A673 (cell line): ENCODE measurements at regions of chr11 and their contacts with region 1.

Region 1: DNA sequence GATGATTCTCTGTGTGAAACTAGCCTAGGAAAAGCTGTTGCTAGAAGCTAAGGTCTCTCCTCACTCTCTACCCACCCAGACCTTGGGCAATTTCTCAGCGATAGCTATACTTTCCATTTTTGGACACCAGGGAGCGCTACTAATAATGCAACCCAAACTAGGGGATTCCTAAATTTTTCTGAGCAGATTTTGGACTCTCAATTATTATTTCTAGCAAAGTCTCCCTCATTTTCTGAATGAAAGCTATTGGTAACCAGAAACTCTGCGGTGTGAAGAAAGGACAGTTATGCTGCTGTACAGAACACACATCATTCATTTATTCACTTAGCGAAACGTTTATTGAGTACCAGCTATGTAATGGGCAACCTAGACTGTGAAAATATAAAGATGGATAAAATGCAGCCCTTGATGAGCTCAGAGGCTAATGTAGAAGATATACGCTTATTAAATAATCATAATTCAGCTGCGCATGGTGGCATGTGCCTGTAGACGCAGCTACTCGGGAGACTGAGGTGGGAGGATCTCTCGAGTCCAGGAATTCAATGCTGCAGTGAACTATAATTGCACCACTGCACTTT is 6.1 kb upstream of the STIM1 start:
- DNase-seq: peak; percentile 70
- H3K4me3 ChIP-seq: no peak overlapping the region
- H3K27ac ChIP-seq: no peak overlapping the region
- H3K4me1 ChIP-seq: peaks cover 1% of the 10 kb centered on the region
- H3K27me3 ChIP-seq: no peaks in the 10 kb centered on the region
- CTCF ChIP-seq: peak; percentile 71

Region 2: GRCh38 chr11:3786781-3787428 is 62.5 kb before region 1 on chr11:
- CTCF ChIA-PET with region 1: no interaction called
- POLR2A ChIA-PET with region 1: no interaction called
- intact Hi-C with region 1: no loop called
- DNase-seq: no peak
- H3K4me3 ChIP-seq: no peak overlapping the region
- H3K27ac ChIP-seq: no peak overlapping the region
- H3K4me1 ChIP-seq: no peaks in the 10 kb centered on the region
- H3K27me3 ChIP-seq: no peaks in the 10 kb centered on the region
- CTCF ChIP-seq: no peak

Region 3: GRCh38 chr11:4072668-4073285 is 223.4 kb after region 1 on chr11:
- CTCF ChIA-PET with region 1: interaction called, 43 read pairs
- POLR2A ChIA-PET with region 1: no interaction called
- intact Hi-C with region 1: loop called (anchors 1 kb)
- DNase-seq: peak; percentile 79
- H3K4me3 ChIP-seq: no peak overlapping the region
- H3K27ac ChIP-seq: no peak overlapping the region
- H3K4me1 ChIP-seq: peaks cover 12% of the 10 kb centered on the region
- H3K27me3 ChIP-seq: no peaks in the 10 kb centered on the region
- CTCF ChIP-seq: peak; percentile 73

Region 4: DNA sequence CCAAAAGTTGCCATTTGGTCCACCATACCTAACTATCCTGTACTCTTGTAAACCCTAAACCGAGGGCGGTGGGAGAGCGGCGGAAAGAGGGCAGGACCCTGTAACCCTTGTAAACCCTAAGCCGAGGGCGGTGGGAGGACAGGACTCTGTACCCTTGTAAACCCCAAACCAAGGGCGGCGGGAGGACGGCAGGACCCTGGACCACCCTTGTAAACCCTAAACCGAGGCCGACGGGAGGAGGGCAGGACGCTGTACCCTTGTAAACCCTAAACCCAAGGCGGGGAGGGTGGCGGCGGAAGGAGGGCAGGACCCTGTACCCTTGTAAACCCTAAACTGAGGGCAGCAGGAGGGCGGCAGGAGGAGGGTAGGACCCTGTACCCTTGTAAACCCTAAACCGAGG is 719.7 kb after region 1 on chr11:
- CTCF ChIA-PET with region 1: no interaction called
- POLR2A ChIA-PET with region 1: no interaction called
- intact Hi-C with region 1: no loop called
- DNase-seq: no peak
- H3K4me3 ChIP-seq: no peak overlapping the region
- H3K27ac ChIP-seq: no peak overlapping the region
- H3K4me1 ChIP-seq: no peaks in the 10 kb centered on the region
- H3K27me3 ChIP-seq: no peaks in the 10 kb centered on the region
- CTCF ChIP-seq: no peak